HepG2 (cell line): ENCODE measurements at regions of chr14 and their contacts with region 1.

Region 1: DNA sequence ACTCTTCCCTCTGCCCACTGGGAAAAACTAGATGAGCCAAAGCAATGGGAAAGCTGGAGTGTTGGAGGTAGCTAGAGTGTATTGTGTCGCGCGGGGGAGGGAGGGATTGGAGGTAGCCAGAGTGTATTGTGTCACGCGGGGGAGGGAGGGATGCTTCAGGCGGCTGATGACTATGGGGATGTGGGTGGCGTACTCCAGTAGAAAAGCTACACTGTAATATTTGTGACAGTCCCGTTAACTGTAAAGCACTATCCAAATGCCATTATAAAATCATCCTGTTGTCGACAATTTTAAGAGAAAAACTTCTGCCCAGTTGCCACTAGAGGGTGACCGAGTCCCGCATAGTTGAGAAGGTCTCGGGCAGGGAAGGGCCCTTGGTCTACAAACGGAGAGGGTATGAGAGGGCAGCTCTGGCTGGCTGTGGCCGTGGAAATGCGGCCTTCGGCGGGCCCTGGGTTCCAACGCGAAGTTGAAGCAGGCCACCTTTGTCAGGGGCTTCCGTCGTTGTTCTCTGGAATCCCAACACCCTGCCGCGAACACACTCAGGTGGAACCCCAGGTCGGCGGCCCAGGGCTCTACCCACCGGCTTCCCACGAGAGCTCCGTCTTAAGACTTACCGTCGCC is 15.1 kb upstream of the PLEK2 start:
- DNase-seq: peak; percentile 76
- ATAC-seq: peak; percentile 82
- H3K4me3 ChIP-seq: peak overlapping the region in 1 of 3 experiments; percentile 41; a peak in 1 of 6 replicates
- H3K27ac ChIP-seq: no peak overlapping the region
- H3K4me1 ChIP-seq: peaks cover 32% of the 10 kb centered on the region
- H3K27me3 ChIP-seq: peaks cover 0 to 6% of the 10 kb centered on the region in 2 experiments; a peak in 2 of 5 replicates
- CTCF ChIP-seq: peak; percentile 91
- EP300 ChIP-seq: no peak
- POLR2A ChIP-seq: no peak
- RAD21 ChIP-seq: peak; percentile 82

Region 2: GRCh38 chr14:67526676-67527459 is 99.8 kb after region 1 on chr14:
- CTCF ChIA-PET with region 1: no interaction called
- POLR2A ChIA-PET with region 1: no interaction called
- in situ Hi-C with region 1: no loop called
- intact Hi-C with region 1: loop called (anchors 5 kb)
- DNase-seq: peak; percentile 43
- ATAC-seq: peak; percentile 96
- H3K4me3 ChIP-seq: no peak overlapping the region
- H3K27ac ChIP-seq: no peak overlapping the region
- H3K4me1 ChIP-seq: peaks cover 38% of the 10 kb centered on the region
- H3K27me3 ChIP-seq: peaks cover 0 to 14% of the 10 kb centered on the region in 2 experiments; a peak in 2 of 5 replicates
- CTCF ChIP-seq: peak; percentile 92
- EP300 ChIP-seq: no peak
- POLR2A ChIP-seq: no peak
- RAD21 ChIP-seq: peak; percentile 69